CD4-positive, alpha-beta T cell (primary cell): ENCODE measurements at regions of chr9 and their contacts with region 1.

Region 1: GRCh38 chr9:136410500-136411287 is at the starts of genes ENTR1 and PMPCA:
- DNase-seq: peak; percentile 89 to 98 (median 94)
- ATAC-seq: peak; percentile 85
- H3K4me3 ChIP-seq: peak within 1 kb of the TSS; percentile 95
- H3K4me3 Mint-ChIP-seq: peak within 1 kb of the TSS; percentile 91
- H3K27ac ChIP-seq: peak within 1 kb of the TSS; percentile 87 to 95
- H3K27ac Mint-ChIP-seq: peak within 1 kb of the TSS; percentile 91
- H3K4me1 ChIP-seq: peaks cover 47% of the 10 kb centered on the region
- H3K4me1 Mint-ChIP-seq: peaks cover 42% of the 10 kb centered on the region
- H3K27me3 ChIP-seq: no peaks in the 10 kb centered on the region
- H3K27me3 Mint-ChIP-seq: no peaks in the 10 kb centered on the region
- CTCF ChIP-seq: no peak
- total RNA-seq, gene ENTR1: 37.7 to 43.2 TPM
- total RNA-seq, gene PMPCA: 107 to 109 TPM

Region 2: GRCh38 chr9:136400038-136400834 is 10.5 kb before region 1 on chr9 and contains the start of gene SNAPC4:
- CTCF ChIA-PET with region 1: interaction called, 7 read pairs
- POLR2A ChIA-PET with region 1: interaction called, 18 read pairs
- intact Hi-C with region 1: loop called in 1 of 2 experiments (anchors 1 kb)
- DNase-seq: peak; percentile 75 to 95 (median 86)
- ATAC-seq: peak; percentile 66
- H3K4me3 ChIP-seq: peak within 1 kb of the TSS; percentile 72
- H3K4me3 Mint-ChIP-seq: peak within 1 kb of the TSS; percentile 88
- H3K27ac ChIP-seq: no peak within 1 kb of the TSS
- H3K27ac Mint-ChIP-seq: peak within 1 kb of the TSS; percentile 55
- H3K4me1 ChIP-seq: peaks cover 59% of the 10 kb centered on the region
- H3K4me1 Mint-ChIP-seq: peaks cover 41% of the 10 kb centered on the region
- H3K27me3 ChIP-seq: no peaks in the 10 kb centered on the region
- H3K27me3 Mint-ChIP-seq: no peaks in the 10 kb centered on the region
- CTCF ChIP-seq: peak; percentile 87
- total RNA-seq, gene SNAPC4: 7.7 to 8.0 TPM

Region 3: DNA sequence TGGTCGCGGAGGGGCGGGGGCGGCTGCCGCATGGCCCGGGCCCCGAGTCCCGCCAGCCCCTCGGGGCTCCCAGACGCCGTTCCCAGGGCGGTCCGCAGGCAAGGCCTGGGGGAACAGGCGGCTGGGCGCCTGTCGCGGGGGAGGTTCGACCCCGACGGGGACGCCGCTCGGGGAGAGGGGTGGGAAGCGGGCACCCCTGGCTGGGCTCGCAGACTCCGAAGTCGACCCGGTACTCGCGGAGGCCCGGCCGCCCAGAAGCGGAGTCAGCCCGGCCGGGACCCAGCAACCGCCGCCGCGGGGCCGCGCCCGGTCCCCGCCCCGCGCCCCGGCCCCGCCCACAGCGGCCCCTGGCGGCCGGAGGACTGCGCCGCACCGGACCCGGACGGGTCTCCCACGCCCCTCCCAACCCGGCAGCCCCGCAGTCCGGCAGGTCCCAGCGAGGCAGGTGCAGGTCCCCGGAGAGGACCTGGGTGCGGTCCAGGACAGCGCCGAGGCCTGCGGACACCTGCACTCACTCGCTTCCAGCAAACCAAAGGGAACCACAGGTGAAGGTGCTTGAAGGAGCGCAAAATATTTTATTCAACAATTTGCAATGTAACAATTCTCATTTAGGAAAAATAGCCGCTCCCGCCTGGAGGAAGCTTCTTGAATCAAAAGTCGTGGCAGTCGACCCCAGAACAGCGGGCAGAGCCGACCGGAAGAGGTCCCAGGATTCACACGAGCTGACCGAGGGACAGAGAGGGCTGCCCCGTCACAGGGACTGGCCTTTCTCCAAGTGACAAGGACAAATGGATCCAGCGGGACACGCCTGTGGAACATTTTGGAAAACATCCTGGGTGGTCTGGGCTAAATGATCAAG is 29.1 kb after region 1 on chr9 and contains the start of gene INPP5E:
- CTCF ChIA-PET with region 1: interaction called, 3 read pairs
- POLR2A ChIA-PET with region 1: interaction called, 4 read pairs
- intact Hi-C with region 1: loop called in 1 of 2 experiments (anchors 2 kb)
- DNase-seq: peak; percentile 65 to 91 (median 82)
- ATAC-seq: peak; percentile 78
- H3K4me3 ChIP-seq: peak within 1 kb of the TSS; percentile 71
- H3K4me3 Mint-ChIP-seq: peak within 1 kb of the TSS; percentile 97
- H3K27ac ChIP-seq: peak within 1 kb of the TSS in 1 of 2 donors; percentile 29
- H3K27ac Mint-ChIP-seq: peak within 1 kb of the TSS; percentile 92
- H3K4me1 ChIP-seq: peaks cover 35% of the 10 kb centered on the region
- H3K4me1 Mint-ChIP-seq: peaks cover 21% of the 10 kb centered on the region
- H3K27me3 ChIP-seq: no peaks in the 10 kb centered on the region
- H3K27me3 Mint-ChIP-seq: no peaks in the 10 kb centered on the region
- CTCF ChIP-seq: peak; percentile 50
- total RNA-seq, gene INPP5E: 17.2 to 19.4 TPM

Region 4: DNA sequence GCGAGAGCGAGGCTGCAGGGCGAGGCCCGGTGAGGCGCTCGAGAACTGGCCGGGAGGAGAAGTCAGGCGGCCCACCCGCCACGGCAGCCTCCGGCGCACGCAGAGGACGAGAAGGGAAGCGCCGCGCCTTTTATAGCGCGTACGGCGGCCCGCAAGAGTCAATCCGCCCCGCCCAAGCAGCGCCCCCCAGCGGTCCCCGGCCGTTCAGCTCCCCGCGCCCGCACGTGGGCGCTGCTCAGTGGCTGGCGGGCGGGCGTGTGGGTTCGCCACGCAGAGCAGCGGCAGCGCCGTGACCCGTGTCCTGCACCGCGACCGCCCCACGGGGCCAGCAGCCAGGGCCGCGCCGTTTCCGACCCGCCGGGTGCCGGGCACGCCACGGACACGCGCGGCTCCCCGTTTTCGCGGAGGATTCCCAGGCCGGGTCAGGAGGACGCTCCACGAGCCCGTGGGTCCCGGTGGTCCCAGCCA is 317.4 kb after region 1 on chr9:
- CTCF ChIA-PET with region 1: no interaction called
- POLR2A ChIA-PET with region 1: no interaction called
- intact Hi-C with region 1: loop called in 1 of 2 experiments (anchors 2 kb)
- DNase-seq: peak; percentile 84 to 97 (median 94)
- ATAC-seq: peak; percentile 73
- H3K4me3 ChIP-seq: peak overlapping the region; percentile 94
- H3K4me3 Mint-ChIP-seq: peak overlapping the region; percentile 74
- H3K27ac ChIP-seq: peak overlapping the region in 1 of 2 donors; percentile 65
- H3K27ac Mint-ChIP-seq: peak overlapping the region; percentile 92
- H3K4me1 ChIP-seq: peaks cover 40% of the 10 kb centered on the region
- H3K4me1 Mint-ChIP-seq: peaks cover 24% of the 10 kb centered on the region
- H3K27me3 ChIP-seq: no peaks in the 10 kb centered on the region
- H3K27me3 Mint-ChIP-seq: peaks cover 7% of the 10 kb centered on the region
- CTCF ChIP-seq: peak; percentile 80